ENCODE measurements at regions of chr14 and their contacts with region 1.

Region 1: GRCh38 chr14:35814371-35815005 is 5.4 kb upstream of the RALGAPA1 start:
- DNase-seq: peak; percentile 64 to 88
- ATAC-seq: peak; percentile 85 to 90 (median 86)
- H3K4me3 ChIP-seq: no peak overlapping the region
- H3K4me3 Mint-ChIP-seq: no peak overlapping the region
- H3K27ac ChIP-seq: no peak overlapping the region
- H3K27ac Mint-ChIP-seq: no peak overlapping the region
- H3K4me1 ChIP-seq: no peaks in the 10 kb centered on the region
- H3K4me1 Mint-ChIP-seq: peaks cover 2 to 5% of the 10 kb centered on the region in 2 donors
- H3K27me3 ChIP-seq: no peaks in the 10 kb centered on the region
- H3K27me3 Mint-ChIP-seq: no peaks in the 10 kb centered on the region
- CTCF ChIP-seq: peak; percentile 81

Region 2: DNA sequence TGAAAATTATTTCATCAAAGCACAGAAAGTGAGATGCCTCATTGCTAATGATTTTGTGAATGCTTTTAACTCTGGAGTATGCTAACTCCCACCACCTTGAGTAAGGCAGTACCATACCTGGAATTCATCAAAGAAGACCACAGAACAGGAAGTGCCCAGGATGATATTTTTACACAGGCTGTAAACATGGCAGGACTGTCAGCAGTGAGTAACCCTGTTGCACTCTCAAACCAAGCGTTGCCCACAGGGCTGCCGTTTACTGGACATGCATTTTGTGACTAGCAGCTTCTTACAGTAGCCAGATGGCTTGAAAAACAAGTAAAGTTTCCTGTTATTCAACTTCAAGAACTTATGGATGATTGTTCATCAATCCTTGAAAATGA is 47.8 kb before region 1 on chr14:
- intact Hi-C with region 1: loop called (anchors 10 kb)
- DNase-seq: peak in 1 of 2 donors; percentile 11
- ATAC-seq: no peak
- H3K4me3 ChIP-seq: no peak overlapping the region
- H3K4me3 Mint-ChIP-seq: no peak overlapping the region
- H3K27ac ChIP-seq: no peak overlapping the region
- H3K27ac Mint-ChIP-seq: no peak overlapping the region
- H3K4me1 ChIP-seq: peaks cover 2% of the 10 kb centered on the region
- H3K4me1 Mint-ChIP-seq: no peaks in the 10 kb centered on the region
- H3K27me3 ChIP-seq: no peaks in the 10 kb centered on the region
- H3K27me3 Mint-ChIP-seq: no peaks in the 10 kb centered on the region
- CTCF ChIP-seq: no peak